ENCODE measurements at regions of chr6 and their contacts with region 1.

Region 1: GRCh38 chr6:39166189-39166911 is 51.4 kb upstream of the SAYSD1 start:
- DNase-seq: peak; percentile 60 to 90 (median 76)
- ATAC-seq: peak; percentile 43 to 84 (median 72)
- H3K4me3 ChIP-seq: no peak overlapping the region
- H3K27ac ChIP-seq: no peak overlapping the region
- H3K4me1 ChIP-seq: peaks cover 0 to 4% (median 0%) of the 10 kb centered on the region in 12 donors
- H3K27me3 ChIP-seq: peaks cover 0 to 13% (median 3%) of the 10 kb centered on the region in 9 donors
- CTCF ChIP-seq: peak; percentile 60 to 90 (median 82)
- POLR2A ChIP-seq: no peak

Region 2: DNA sequence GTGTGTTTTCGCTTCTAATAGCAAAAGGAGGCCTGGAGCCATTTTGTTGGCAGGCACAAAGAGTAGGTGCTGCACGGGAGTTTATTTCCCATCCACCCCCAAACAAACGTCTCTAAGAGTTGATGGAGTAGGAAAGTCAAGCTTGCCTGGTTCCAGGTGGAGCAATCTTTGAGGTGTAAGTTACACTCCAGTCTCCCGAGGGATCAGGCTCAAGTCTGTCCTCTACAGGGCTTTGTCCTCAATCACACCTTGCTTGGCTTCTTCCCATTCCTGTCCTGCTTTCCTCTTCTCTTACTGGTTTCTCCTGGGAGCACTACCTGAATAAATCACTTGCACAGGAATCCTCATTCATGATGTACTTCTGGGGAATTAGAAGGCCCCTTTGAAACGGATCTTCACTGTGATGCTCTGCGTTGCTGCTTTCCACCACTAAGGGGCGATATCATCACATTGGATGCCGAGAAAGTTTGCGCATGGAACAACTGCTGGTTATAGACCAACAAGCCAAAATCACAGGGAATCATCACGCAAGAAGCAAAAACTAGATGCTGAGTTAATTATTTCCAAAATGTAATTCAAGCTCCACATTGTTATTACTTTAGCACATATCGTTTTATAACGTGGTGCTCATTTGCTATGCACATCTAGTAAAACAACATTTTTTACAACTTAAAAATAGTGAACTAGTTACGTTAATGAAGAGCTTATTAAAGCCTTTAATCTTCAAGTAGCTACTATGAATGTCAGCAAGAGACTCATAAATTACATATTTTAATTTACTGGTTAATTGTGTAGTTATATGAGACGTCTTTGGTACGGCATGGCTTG is 294.4 kb before region 1 on chr6:
- intact Hi-C with region 1: loop called in 1 of 10 experiments (anchors 5 kb)
- DNase-seq: peak in 2 of 5 donors; percentile 27 to 36
- ATAC-seq: peak in 1 of 4 donors; percentile 42
- H3K4me3 ChIP-seq: no peak overlapping the region
- H3K27ac ChIP-seq: no peak overlapping the region
- H3K4me1 ChIP-seq: peaks cover 0 to 5% (median 0%) of the 10 kb centered on the region in 12 donors
- H3K27me3 ChIP-seq: peaks cover 0 to 19% (median 0%) of the 10 kb centered on the region in 9 donors
- CTCF ChIP-seq: peak; percentile 69 to 87 (median 76)
- POLR2A ChIP-seq: no peak

Region 3: DNA sequence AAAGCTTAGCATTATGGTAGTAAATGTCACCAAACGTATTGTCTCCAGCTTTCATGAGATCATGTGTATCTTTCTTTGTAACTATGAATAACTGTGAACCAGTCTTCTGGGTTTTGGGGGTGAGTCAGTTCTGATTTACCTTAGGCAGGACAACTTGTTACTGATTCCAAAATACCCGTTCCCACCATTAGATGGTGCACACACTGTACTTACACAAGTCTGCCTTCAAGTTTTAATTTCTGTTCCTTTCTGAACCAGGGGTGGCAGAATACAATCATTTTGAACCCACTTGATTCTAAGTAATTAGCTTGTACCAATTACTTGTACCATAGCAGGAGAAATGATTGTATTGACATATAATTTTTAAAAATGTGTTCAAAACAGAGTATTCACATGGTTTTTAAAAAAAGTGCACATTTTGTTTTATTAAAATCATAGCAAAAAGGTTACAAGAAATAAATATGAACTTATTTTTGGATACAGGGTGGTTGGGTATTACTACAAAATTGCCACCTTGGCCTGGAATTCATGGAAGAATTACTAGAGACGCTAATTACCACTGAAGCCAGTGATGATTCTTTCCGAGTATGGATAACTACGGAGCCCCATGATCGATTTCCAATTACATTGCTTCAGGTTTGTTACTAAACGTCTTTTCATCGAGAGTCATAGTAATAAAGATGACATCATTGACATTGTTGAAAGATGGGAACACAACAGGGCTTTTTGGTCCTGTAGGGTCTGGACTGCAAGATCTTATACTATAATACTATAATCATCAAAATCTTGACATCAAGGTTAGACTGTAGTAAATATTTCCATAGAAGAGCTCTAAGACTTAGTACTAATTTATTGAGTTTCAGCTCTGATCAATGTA is 192.9 kb before region 1 on chr6:
- intact Hi-C with region 1: loop called in 1 of 10 experiments (anchors 10 kb)
- DNase-seq: no peak
- ATAC-seq: peak; percentile 67 to 76 (median 72)
- H3K4me3 ChIP-seq: no peak overlapping the region
- H3K27ac ChIP-seq: no peak overlapping the region
- H3K4me1 ChIP-seq: peaks cover 0 to 7% (median 0%) of the 10 kb centered on the region in 12 donors
- H3K27me3 ChIP-seq: peaks cover 0 to 13% (median 2%) of the 10 kb centered on the region in 9 donors
- CTCF ChIP-seq: peak; percentile 31 to 70 (median 57)
- POLR2A ChIP-seq: no peak

Region 4: DNA sequence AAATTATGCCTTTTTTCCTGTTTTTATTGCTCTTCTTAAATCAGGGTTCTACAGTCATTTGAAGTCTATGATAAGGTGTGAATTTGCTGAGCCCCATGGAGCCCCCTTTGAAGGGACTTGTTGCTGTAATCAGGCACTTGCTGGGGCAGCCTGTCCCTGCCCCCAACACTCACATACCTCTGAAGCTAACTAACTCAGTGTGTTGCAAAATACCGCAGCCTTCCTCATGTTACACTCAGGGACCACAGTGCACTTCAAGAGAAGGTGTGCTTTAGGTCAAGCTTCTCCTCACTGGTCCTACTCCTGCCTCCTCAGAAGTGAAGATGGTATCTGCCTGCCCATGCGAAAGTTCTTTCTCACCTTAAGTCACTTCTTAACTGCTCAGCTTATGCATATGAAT is 183.9 kb before region 1 on chr6:
- intact Hi-C with region 1: loop called in 2 of 10 experiments (anchors 10 kb)
- DNase-seq: no peak
- ATAC-seq: no peak
- H3K4me3 ChIP-seq: no peak overlapping the region
- H3K27ac ChIP-seq: no peak overlapping the region
- H3K4me1 ChIP-seq: no peaks in the 10 kb centered on the region
- H3K27me3 ChIP-seq: peaks cover 0 to 58% (median 5%) of the 10 kb centered on the region in 9 donors
- CTCF ChIP-seq: no peak
- POLR2A ChIP-seq: no peak

Region 5: DNA sequence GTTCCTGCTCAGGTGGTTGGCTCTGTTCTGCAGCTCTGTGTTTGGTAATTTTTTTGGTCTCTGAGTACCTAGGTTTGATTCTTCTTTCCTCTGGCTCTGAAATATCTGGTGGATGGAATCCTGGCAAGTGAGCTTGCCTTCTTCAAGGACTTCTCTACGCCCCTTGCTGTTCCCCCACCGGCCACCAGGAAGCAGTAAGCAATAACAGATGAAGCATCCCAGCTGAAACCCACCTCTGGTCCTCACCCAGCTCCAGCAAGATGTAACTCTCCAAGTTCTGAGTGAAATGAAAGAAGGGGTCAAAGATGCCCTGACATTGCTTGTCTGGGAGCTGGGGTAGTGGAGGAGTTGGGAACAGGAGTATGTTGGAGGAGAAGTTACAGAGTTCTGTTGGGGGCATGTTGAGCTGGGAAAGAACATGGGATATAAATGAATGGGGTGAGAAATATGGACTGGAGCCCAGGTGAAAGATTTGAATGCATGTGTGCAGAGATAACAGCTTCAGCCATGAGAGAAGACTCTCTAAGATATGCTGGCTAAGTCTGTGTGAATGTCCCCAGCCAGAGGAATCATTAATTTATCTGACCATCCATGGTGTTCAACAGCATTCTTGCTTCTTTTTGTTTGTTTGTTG is 169.1 kb before region 1 on chr6:
- intact Hi-C with region 1: loop called in 1 of 10 experiments (anchors 10 kb)
- DNase-seq: peak in 4 of 5 donors; percentile 22 to 60 (median 28)
- ATAC-seq: peak in 1 of 4 donors; percentile 41
- H3K4me3 ChIP-seq: no peak overlapping the region
- H3K27ac ChIP-seq: no peak overlapping the region
- H3K4me1 ChIP-seq: peaks cover 0 to 9% (median 0%) of the 10 kb centered on the region in 12 donors
- H3K27me3 ChIP-seq: peaks cover 0 to 22% (median 4%) of the 10 kb centered on the region in 9 donors
- CTCF ChIP-seq: peak; percentile 29 to 61 (median 44)
- POLR2A ChIP-seq: no peak

Region 6: DNA sequence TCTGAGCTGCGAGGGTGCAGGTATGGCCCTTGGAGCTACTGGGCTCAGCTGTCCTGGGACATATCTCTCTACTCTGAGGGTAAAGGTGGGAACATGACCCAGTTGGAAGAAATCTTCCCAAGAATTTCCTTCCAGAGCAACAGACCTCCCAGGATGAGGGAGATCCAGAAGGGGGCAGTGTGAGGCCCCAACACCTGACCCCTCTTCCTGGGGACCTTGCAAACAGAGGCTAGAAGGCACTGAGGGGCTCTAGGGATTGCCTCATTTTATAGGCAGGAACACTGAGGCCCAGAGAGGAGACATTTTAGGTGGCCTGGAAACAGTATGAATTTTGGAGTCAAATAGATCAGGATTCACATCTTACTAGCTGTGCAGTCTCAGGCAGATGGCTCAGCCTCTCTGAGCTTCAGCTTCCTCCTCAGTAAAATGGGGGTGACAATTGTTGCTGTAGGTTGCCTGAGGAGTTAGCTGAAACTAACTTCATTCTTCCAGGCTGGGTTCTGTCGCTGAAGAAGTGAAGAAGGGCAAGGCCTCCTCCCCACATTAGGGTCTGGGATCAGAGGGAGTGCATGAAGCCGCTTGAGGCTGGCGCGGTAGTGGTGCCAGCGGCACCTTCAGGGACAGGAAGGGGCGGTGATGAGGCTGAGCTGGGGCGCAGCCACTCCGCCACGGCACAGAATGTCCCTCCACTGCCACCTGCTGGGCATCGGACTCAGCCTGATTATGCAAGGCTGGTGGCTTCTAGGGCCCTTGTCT is 136.5 kb after region 1 on chr6:
- intact Hi-C with region 1: loop called (anchors 1 to 5 kb)
- DNase-seq: peak; percentile 71 to 91 (median 77)
- ATAC-seq: peak; percentile 82 to 93 (median 90)
- H3K4me3 ChIP-seq: no peak overlapping the region
- H3K27ac ChIP-seq: no peak overlapping the region
- H3K4me1 ChIP-seq: peaks cover 0 to 5% (median 0%) of the 10 kb centered on the region in 12 donors
- H3K27me3 ChIP-seq: peaks cover 0 to 19% (median 0%) of the 10 kb centered on the region in 9 donors
- CTCF ChIP-seq: peak; percentile 76 to 90 (median 82)
- POLR2A ChIP-seq: no peak

Region 7: DNA sequence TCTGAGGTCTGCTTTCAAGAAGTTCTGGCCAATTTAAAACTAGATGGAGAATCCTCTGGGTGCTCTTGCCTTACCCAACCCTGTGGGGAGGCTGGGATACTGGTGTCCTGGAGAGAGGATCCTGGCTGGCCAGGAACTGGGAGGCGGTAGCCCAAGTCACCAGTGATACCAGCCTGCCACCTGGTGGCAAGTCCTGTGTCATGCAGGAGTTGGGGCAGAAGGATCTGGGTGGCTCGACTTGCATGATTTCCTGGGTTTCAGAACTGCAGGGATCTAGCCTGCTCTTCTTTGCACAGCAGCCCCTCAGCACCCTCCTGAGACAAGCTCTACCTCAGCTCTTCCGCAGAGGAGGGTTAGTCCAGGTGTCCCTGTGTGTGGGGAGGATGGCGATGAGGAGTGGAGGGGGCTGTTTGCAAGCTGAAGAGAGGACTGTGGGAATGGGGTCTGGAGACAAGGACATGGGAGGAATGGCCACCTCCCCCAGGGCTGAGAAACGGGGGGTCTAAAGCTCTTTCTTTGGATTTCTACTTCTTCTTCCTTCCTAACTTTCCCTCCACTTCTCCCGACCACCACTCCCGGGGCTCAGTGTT is 143.7 kb after region 1 on chr6:
- intact Hi-C with region 1: loop called in 1 of 10 experiments (anchors 2 kb)
- DNase-seq: peak; percentile 50 to 82 (median 68)
- ATAC-seq: peak in 3 of 4 donors; percentile 73 to 87 (median 79)
- H3K4me3 ChIP-seq: no peak overlapping the region
- H3K27ac ChIP-seq: no peak overlapping the region
- H3K4me1 ChIP-seq: peaks cover 0 to 17% (median 10%) of the 10 kb centered on the region in 12 donors
- H3K27me3 ChIP-seq: peaks cover 17 to 55% (median 39%) of the 10 kb centered on the region in 9 donors
- CTCF ChIP-seq: peak; percentile 77 to 89 (median 84)
- POLR2A ChIP-seq: no peak

Measured in heart left ventricle (tissue), 16 donors.